Activated T-helper 2 cell treated with anti-CD3 and anti-CD28 coated beads, Interferon-gamma antibody, Interleukin-2, Interleukin-4, amounts not matched to agents 10 μg/mL and 5 μg/mL and 100 μg/mL, durations not matched to agents 14 hours and 24 hours and 36 hours (primary cell): ENCODE measurements at regions of chr16 and their contacts with region 1.

Region 1: GRCh38 chr16:17470936-17471718 is at the start of gene XYLT1:
- DNase-seq: peak; percentile 27
- H3K4me3 Mint-ChIP-seq: peak within 1 kb of the TSS; percentile 88
- H3K27ac Mint-ChIP-seq: peak within 1 kb of the TSS; percentile 77
- H3K4me1 Mint-ChIP-seq: peaks cover 62% of the 10 kb centered on the region
- H3K27me3 Mint-ChIP-seq: no peaks in the 10 kb centered on the region
- total RNA-seq, gene XYLT1: 15.7 and 18.9 TPM in 2 replicates

Region 2: GRCh38 chr16:17211797-17212196 is 259.3 kb before region 1 on chr16:
- intact Hi-C with region 1: loop called (anchors 5 kb)
- DNase-seq: peak; percentile 18
- H3K4me3 Mint-ChIP-seq: no peak overlapping the region
- H3K27ac Mint-ChIP-seq: no peak overlapping the region
- H3K4me1 Mint-ChIP-seq: peaks cover 16% of the 10 kb centered on the region
- H3K27me3 Mint-ChIP-seq: no peaks in the 10 kb centered on the region

Region 3: GRCh38 chr16:17238284-17239028 is 232.7 kb before region 1 on chr16:
- intact Hi-C with region 1: loop called (anchors 2 kb)
- DNase-seq: peak; percentile 15
- H3K4me3 Mint-ChIP-seq: no peak overlapping the region
- H3K27ac Mint-ChIP-seq: peak overlapping the region; percentile 28
- H3K4me1 Mint-ChIP-seq: peaks cover 23% of the 10 kb centered on the region
- H3K27me3 Mint-ChIP-seq: no peaks in the 10 kb centered on the region

Region 4: DNA sequence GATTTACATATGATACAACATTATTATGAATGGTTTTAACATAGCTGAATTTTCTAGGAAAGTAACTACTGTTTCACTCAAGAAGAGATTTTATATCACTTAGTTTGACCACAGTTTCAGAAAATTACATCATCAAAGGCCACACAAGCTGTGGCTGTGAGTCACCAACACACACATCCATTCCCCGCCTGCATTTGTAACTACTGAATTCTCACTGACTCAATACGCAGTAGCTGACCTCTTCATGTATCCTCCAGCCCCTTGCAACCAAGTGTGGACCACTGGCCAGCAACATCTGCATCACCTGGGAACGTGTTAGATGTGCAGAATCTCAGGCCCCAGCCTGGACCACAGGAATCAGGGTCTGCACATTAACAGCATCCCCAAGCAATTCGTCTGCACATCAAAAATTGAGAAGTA is 198.0 kb before region 1 on chr16:
- intact Hi-C with region 1: loop called (anchors 5 kb)
- DNase-seq: peak; percentile 31
- H3K4me3 Mint-ChIP-seq: no peak overlapping the region
- H3K27ac Mint-ChIP-seq: no peak overlapping the region
- H3K4me1 Mint-ChIP-seq: peaks cover 58% of the 10 kb centered on the region
- H3K27me3 Mint-ChIP-seq: peaks cover 7% of the 10 kb centered on the region

Region 5: GRCh38 chr16:17364319-17365210 is 106.6 kb before region 1 on chr16:
- intact Hi-C with region 1: loop called (anchors 2 kb)
- DNase-seq: peak; percentile 62
- H3K4me3 Mint-ChIP-seq: peak overlapping the region; percentile 20
- H3K27ac Mint-ChIP-seq: peak overlapping the region; percentile 77
- H3K4me1 Mint-ChIP-seq: peaks cover 85% of the 10 kb centered on the region
- H3K27me3 Mint-ChIP-seq: no peaks in the 10 kb centered on the region

Region 6: GRCh38 chr16:17590719-17591654 is 119.9 kb after region 1 on chr16:
- intact Hi-C with region 1: loop called (anchors 5 kb)
- DNase-seq: peak; percentile 68
- H3K4me3 Mint-ChIP-seq: peak overlapping the region; percentile 34
- H3K27ac Mint-ChIP-seq: peak overlapping the region; percentile 97
- H3K4me1 Mint-ChIP-seq: peaks cover 27% of the 10 kb centered on the region
- H3K27me3 Mint-ChIP-seq: no peaks in the 10 kb centered on the region